ENCODE measurements at regions of chr13 and their contacts with region 1.

Region 1: GRCh38 chr13:20924758-20925394 is 22.3 kb upstream of the XPO4 start:
- DNase-seq: peak in 2 of 4 donors; percentile 76 to 91
- ATAC-seq: peak; percentile 89
- H3K4me3 ChIP-seq: no peak overlapping the region
- H3K27ac ChIP-seq: no peak overlapping the region
- H3K4me1 ChIP-seq: no peaks in the 10 kb centered on the region
- H3K27me3 ChIP-seq: no peaks in the 10 kb centered on the region
- CTCF ChIP-seq: peak; percentile 65 to 70

Region 2: GRCh38 chr13:20182231-20182846 is 742.5 kb before region 1 on chr13:
- intact Hi-C with region 1: loop called in 1 of 2 experiments (anchors 10 kb)
- DNase-seq: peak in 1 of 4 donors; percentile 80
- ATAC-seq: peak; percentile 98
- H3K4me3 ChIP-seq: no peak overlapping the region
- H3K27ac ChIP-seq: no peak overlapping the region
- H3K4me1 ChIP-seq: no peaks in the 10 kb centered on the region
- H3K27me3 ChIP-seq: peaks cover 0 to 51% of the 10 kb centered on the region in 2 donors
- CTCF ChIP-seq: peak; percentile 80 to 87

Region 3: GRCh38 chr13:20495082-20496023 is 429.5 kb before region 1 on chr13:
- intact Hi-C with region 1: loop called in 1 of 2 experiments (anchors 10 kb)
- DNase-seq: peak in 2 of 4 donors; percentile 68 to 74
- ATAC-seq: peak; percentile 97
- H3K4me3 ChIP-seq: no peak overlapping the region
- H3K27ac ChIP-seq: no peak overlapping the region
- H3K4me1 ChIP-seq: peaks cover 0 to 13% of the 10 kb centered on the region in 2 donors
- H3K27me3 ChIP-seq: no peaks in the 10 kb centered on the region
- CTCF ChIP-seq: peak; percentile 90 to 98

Region 4: DNA sequence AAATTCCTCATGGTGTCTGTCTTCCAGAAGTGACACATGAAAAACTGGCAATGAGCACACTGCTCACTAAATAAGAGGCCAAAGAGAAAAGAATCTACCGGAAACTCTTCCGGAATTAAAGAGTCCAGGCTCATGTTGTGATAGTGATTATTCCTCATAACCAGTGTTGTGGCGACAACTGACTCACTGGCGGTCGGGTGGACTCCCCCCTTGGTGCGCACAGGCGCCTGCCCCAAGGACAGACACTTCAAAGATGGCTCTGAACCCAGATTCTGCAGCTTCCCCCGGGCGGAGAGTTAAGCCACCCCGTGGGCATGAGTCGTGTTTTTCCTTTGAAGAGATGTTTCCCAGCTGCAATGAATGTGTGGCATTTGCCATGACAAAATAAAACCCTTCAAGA is 211.1 kb before region 1 on chr13:
- intact Hi-C with region 1: loop called in 1 of 2 experiments (anchors 10 kb)
- DNase-seq: no peak
- ATAC-seq: no peak
- H3K4me3 ChIP-seq: no peak overlapping the region
- H3K27ac ChIP-seq: peak overlapping the region in 1 of 2 donors; percentile 65
- H3K4me1 ChIP-seq: peaks cover 6 to 11% of the 10 kb centered on the region in 2 donors
- H3K27me3 ChIP-seq: no peaks in the 10 kb centered on the region
- CTCF ChIP-seq: no peak

Region 5: GRCh38 chr13:20796791-20797508 is 127.9 kb before region 1 on chr13:
- intact Hi-C with region 1: no loop called
- DNase-seq: no peak
- ATAC-seq: peak; percentile 19
- H3K4me3 ChIP-seq: no peak overlapping the region
- H3K27ac ChIP-seq: no peak overlapping the region
- H3K4me1 ChIP-seq: peaks cover 0 to 6% of the 10 kb centered on the region in 2 donors
- H3K27me3 ChIP-seq: no peaks in the 10 kb centered on the region
- CTCF ChIP-seq: no peak